Sciatic nerve (tissue), 2 donors: ENCODE measurements at regions of chr11 and their contacts with region 1.

Region 1: GRCh38 chr11:132704781-132705375 is 827.4 kb downstream of the OPCML start:
- DNase-seq: no peak
- ATAC-seq: no peak

Region 2: GRCh38 chr11:132639986-132640385 is 64.9 kb before region 1 on chr11:
- intact Hi-C with region 1: loop called (anchors 2 kb)
- DNase-seq: no peak
- ATAC-seq: no peak